Endothelial cell of umbilical vein (primary cell): ENCODE measurements at regions of chr19 and their contacts with region 1.

Region 1: DNA sequence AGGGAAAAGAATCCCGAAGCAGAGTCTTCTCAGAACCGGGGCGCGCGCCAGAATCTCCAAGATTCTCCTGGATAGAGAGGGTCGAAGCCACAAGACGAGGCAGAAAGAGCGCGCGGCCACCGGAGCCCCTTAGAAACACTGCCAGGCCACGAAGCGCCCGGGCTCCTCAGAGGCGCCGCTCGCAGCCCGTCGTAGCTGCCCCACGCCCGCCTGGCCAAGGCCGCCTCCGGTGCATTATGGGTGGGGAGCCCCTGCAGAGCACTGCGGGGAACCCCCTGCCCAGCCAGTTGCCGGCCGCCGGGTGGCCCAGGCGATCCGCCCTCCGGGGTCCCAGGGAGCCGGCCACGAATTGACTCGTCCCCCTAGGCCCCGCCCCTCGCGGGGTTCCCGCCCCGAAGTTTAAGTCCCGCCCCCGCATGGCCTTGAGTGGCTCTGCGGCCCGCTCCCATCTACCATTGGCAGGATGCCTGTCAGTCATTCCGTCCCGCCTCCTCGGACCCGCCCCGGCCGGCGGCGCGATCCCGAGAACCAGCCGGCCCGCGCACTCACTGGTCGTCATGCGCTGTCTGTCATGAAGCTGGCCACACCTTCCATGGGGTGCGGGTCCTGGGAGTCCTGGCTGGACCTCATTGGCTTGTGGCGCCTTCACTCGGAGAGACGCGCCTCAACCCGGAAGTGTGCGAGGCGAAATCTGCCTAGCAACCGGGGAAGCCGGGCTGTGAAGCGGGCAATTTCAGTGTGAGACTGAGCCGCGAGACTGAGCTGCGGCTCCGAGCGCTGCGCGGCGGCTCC is 20.2 kb upstream of the GATAD2A start:
- DNase-seq: peak; percentile 100
- H3K4me3 ChIP-seq: peak overlapping the region; percentile 53 to 89 (median 74)
- H3K27ac ChIP-seq: peak overlapping the region; percentile 92
- H3K4me1 ChIP-seq: peaks cover 26% of the 10 kb centered on the region
- H3K27me3 ChIP-seq: no peaks in the 10 kb centered on the region
- CTCF ChIP-seq: peak in 1 of 2 donors; percentile 15
- POLR2A ChIP-seq: peak; percentile 84

Region 2: DNA sequence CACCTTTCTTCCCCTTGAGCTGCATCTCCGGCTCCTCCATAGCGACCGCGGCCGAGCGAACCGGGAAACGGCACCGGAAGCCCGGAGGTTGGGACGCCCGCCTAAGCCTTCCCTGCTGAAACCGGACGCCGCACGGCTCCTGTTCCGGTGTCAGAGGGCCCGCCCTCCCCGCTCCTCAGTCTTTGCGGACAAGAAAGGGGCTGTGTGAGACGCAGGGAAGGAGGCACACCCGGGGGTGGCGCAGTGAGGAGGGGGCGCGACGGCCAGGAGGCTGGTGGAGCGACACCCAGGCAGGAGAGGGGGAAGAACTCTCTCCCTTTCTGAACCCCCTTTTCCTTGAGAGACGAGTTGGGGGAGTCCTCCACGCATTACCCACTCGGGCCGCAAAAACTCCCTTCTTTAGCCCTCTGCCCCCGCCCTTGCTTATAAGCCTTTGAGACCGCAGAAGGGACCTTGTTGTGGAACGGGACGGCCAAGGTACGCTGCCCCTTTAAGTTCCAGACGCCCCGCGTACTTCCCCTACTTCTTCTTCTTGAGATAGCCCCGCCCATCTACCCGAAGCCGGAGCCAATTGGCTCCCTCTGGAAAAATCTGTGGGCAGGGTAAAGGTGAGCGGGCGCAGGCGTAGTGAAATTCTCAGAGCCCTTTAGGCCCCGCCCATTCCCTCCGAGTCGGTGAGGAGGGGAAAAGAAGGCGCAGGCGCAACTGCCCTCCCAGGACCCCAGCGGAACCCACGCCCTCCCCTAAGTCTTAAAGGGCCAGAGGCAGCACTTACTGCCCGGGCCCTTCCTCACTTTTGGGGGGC is 193.0 kb before region 1 on chr19 and contains the starts of genes BORCS8 and RFXANK:
- CTCF ChIA-PET with region 1: no interaction called
- POLR2A ChIA-PET with region 1: no interaction called
- dilution Hi-C with region 1: no loop called
- intact Hi-C with region 1: loop called (anchors 1 kb)
- DNase-seq: peak; percentile 100
- H3K4me3 ChIP-seq: peak within 1 kb of the TSS; percentile 78 to 100 (median 98)
- H3K27ac ChIP-seq: peak within 1 kb of the TSS; percentile 98
- H3K4me1 ChIP-seq: peaks cover 15% of the 10 kb centered on the region
- H3K27me3 ChIP-seq: no peaks in the 10 kb centered on the region
- CTCF ChIP-seq: no peak
- POLR2A ChIP-seq: peak; percentile 52
- total RNA-seq, gene BORCS8: 35.6 and 45.8 TPM in 2 replicates
- total RNA-seq, gene RFXANK: 105 and 118 TPM in 2 replicates

Region 3: DNA sequence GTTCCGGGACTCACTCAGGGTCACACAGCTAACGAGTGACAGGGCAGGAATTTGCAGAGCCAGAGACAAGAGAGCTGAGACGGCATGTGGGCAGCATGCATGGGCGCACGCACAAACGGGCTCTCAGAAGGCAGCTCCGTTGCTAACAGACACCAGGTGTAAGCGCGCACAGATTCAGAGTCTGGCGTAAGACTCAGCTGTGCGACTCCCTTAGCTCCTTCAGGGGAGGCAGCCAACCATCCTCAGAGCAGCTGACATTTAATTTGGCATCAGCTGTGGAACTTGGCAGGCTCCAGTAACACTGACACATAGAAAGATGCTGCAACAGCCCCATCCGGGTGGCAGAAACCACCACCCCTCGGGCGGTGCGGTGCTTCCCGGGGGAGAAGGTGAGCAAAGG is 104.7 kb before region 1 on chr19:
- CTCF ChIA-PET with region 1: no interaction called
- POLR2A ChIA-PET with region 1: no interaction called
- dilution Hi-C with region 1: no loop called
- intact Hi-C with region 1: no loop called
- DNase-seq: no peak
- H3K4me3 ChIP-seq: no peak overlapping the region
- H3K27ac ChIP-seq: no peak overlapping the region
- H3K4me1 ChIP-seq: no peaks in the 10 kb centered on the region
- H3K27me3 ChIP-seq: no peaks in the 10 kb centered on the region
- CTCF ChIP-seq: no peak
- POLR2A ChIP-seq: no peak

Region 4: DNA sequence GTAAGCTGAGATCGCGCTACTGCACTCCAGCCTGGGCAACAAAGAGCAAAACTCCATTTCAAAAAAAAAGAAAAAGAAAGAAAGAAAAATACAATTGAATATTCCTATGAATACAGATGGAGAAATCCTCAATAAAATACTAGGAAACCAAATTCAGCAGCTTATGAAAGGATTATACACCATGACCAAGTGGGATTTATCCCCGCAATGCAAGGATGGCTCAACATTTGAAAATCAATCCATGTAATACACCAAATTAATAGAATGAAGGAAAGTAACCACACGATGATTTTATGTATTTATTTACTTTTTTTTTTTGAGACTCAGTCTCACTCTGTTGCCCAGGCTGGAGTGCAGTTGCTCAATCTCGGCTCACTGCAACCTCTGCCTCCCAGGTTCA is 92.7 kb before region 1 on chr19:
- CTCF ChIA-PET with region 1: no interaction called
- POLR2A ChIA-PET with region 1: no interaction called
- dilution Hi-C with region 1: no loop called
- intact Hi-C with region 1: no loop called
- DNase-seq: no peak
- H3K4me3 ChIP-seq: no peak overlapping the region
- H3K27ac ChIP-seq: no peak overlapping the region
- H3K4me1 ChIP-seq: no peaks in the 10 kb centered on the region
- H3K27me3 ChIP-seq: no peaks in the 10 kb centered on the region
- CTCF ChIP-seq: no peak
- POLR2A ChIP-seq: no peak

Region 5: GRCh38 chr19:19366612-19367396 is 18.5 kb before region 1 on chr19:
- CTCF ChIA-PET with region 1: interaction called, 4 read pairs
- POLR2A ChIA-PET with region 1: no interaction called
- dilution Hi-C with region 1: no loop called
- intact Hi-C with region 1: loop called (anchors 1 kb)
- DNase-seq: peak; percentile 67
- H3K4me3 ChIP-seq: no peak overlapping the region
- H3K27ac ChIP-seq: no peak overlapping the region
- H3K4me1 ChIP-seq: peaks cover 8% of the 10 kb centered on the region
- H3K27me3 ChIP-seq: no peaks in the 10 kb centered on the region
- CTCF ChIP-seq: peak; percentile 96 to 98
- POLR2A ChIP-seq: no peak

Region 6: DNA sequence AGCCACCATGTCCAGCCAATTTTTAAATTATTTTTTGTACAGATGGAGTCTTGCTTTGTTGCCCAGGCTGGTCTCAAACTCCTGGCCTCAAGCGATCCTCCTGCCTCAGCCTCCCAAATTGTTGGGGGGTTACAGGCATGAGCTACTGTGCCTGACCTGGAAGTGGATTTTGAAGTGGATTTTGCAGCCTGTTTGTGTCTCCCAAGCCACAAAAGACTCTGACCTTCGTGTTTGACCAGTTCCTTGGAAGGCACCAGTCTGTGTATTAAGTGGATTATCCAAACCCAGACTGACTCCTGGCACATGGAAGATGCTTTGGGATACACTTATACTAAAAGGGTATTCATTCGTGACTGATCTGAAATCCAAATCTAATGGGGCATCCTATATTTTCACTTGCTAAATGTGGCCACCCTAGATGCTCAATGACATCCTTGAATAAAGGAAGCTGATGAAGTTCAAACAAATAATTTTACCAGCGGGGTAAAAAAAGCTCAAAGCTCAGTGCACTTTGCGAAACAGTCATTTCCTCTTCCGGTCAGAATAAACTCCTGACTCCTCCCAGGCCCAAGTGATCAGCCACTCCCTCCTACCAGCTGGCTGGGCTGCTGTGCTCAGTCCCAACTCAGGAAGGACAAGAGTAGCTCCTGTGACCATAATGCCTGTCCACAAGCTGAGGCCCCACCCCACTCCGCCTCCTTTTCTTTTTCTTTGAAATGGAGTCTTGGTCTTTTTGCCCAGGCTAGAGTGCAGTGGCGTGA is 12.5 kb before region 1 on chr19:
- CTCF ChIA-PET with region 1: interaction called, 6 read pairs
- POLR2A ChIA-PET with region 1: interaction called, 6 read pairs
- dilution Hi-C with region 1: no loop called
- intact Hi-C with region 1: loop called (anchors 1 kb)
- DNase-seq: peak; percentile 80
- H3K4me3 ChIP-seq: no peak overlapping the region
- H3K27ac ChIP-seq: peak overlapping the region; percentile 66
- H3K4me1 ChIP-seq: peaks cover 11% of the 10 kb centered on the region
- H3K27me3 ChIP-seq: no peaks in the 10 kb centered on the region
- CTCF ChIP-seq: no peak
- POLR2A ChIP-seq: peak; percentile 51

Region 7: GRCh38 chr19:19404879-19405860 is 19.9 kb after region 1 on chr19 and contains the start of gene GATAD2A:
- CTCF ChIA-PET with region 1: interaction called, 17 read pairs
- POLR2A ChIA-PET with region 1: interaction called, 9 read pairs
- dilution Hi-C with region 1: no loop called
- intact Hi-C with region 1: loop called (anchors 1 kb)
- DNase-seq: peak; percentile 88
- H3K4me3 ChIP-seq: peak within 1 kb of the TSS; percentile 79 to 85 (median 84)
- H3K27ac ChIP-seq: peak within 1 kb of the TSS; percentile 63
- H3K4me1 ChIP-seq: peaks cover 11% of the 10 kb centered on the region
- H3K27me3 ChIP-seq: no peaks in the 10 kb centered on the region
- CTCF ChIP-seq: peak; percentile 17 to 20
- POLR2A ChIP-seq: peak; percentile 51
- total RNA-seq, gene GATAD2A: 134 and 138 TPM in 2 replicates

Region 8: DNA sequence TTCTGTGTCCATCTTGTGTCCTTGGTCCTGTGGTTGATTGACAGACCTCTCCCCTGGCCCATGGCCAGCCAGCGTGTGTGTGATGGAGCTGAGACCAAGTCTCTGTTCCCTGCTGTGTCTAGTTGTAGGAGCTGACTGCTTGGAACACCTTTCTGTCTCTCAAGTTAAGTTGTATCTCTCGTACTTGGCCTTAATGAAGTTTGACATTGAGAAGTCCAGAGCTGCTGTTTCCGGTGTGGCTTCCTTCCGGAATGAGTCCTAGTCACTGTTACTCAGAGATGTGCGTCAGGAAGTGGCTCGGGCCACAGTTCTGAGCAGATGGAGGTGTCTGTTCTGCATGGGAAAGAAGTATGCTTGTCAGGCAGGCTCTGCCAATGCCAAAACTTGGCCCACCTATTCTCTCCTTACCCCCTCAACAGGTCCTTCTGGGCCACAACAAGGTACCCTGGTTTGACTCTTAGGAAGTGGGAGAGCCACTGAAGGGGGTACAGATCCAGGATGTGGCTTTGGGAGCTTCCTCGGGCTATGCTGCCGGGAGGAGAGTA is 74.5 kb after region 1 on chr19:
- CTCF ChIA-PET with region 1: no interaction called
- POLR2A ChIA-PET with region 1: no interaction called
- dilution Hi-C with region 1: no loop called
- intact Hi-C with region 1: loop called (anchors 5 kb)
- DNase-seq: peak; percentile 73
- H3K4me3 ChIP-seq: peak overlapping the region in 1 of 3 experiments; percentile 6
- H3K27ac ChIP-seq: peak overlapping the region; percentile 91
- H3K4me1 ChIP-seq: peaks cover 67% of the 10 kb centered on the region
- H3K27me3 ChIP-seq: no peaks in the 10 kb centered on the region
- CTCF ChIP-seq: no peak
- POLR2A ChIP-seq: peak; percentile 22